ENCODE measurements at regions of chr13 and their contacts with region 1.

Region 1: GRCh38 chr13:48437371-48437770 is 24.5 kb upstream of the LPAR6 start:
- H3K4me3 Mint-ChIP-seq: no peak overlapping the region
- H3K27ac Mint-ChIP-seq: peak overlapping the region; percentile 93
- H3K4me1 Mint-ChIP-seq: peaks cover 48% of the 10 kb centered on the region
- H3K27me3 Mint-ChIP-seq: no peaks in the 10 kb centered on the region

Region 2: GRCh38 chr13:48233046-48233907 is 204.1 kb before region 1 on chr13 and contains the start of gene ITM2B:
- intact Hi-C with region 1: no loop called
- H3K4me3 Mint-ChIP-seq: peak within 1 kb of the TSS; percentile 87
- H3K27ac Mint-ChIP-seq: peak within 1 kb of the TSS; percentile 94
- H3K4me1 Mint-ChIP-seq: peaks cover 26% of the 10 kb centered on the region
- H3K27me3 Mint-ChIP-seq: peaks cover 11% of the 10 kb centered on the region

Region 3: GRCh38 chr13:48400850-48401291 is 36.5 kb before region 1 on chr13:
- intact Hi-C with region 1: loop called (anchors 5 kb)
- H3K4me3 Mint-ChIP-seq: no peak overlapping the region
- H3K27ac Mint-ChIP-seq: peak overlapping the region; percentile 57
- H3K4me1 Mint-ChIP-seq: peaks cover 46% of the 10 kb centered on the region
- H3K27me3 Mint-ChIP-seq: no peaks in the 10 kb centered on the region

Region 4: GRCh38 chr13:48477191-48477855 is 40.0 kb after region 1 on chr13:
- intact Hi-C with region 1: loop called (anchors 5 kb)
- H3K4me3 Mint-ChIP-seq: peak overlapping the region; percentile 68
- H3K27ac Mint-ChIP-seq: peak overlapping the region; percentile 89
- H3K4me1 Mint-ChIP-seq: peaks cover 30% of the 10 kb centered on the region
- H3K27me3 Mint-ChIP-seq: no peaks in the 10 kb centered on the region

Region 5: GRCh38 chr13:48551329-48551728 is 114.0 kb after region 1 on chr13:
- intact Hi-C with region 1: no loop called
- H3K4me3 Mint-ChIP-seq: no peak overlapping the region
- H3K27ac Mint-ChIP-seq: no peak overlapping the region
- H3K4me1 Mint-ChIP-seq: peaks cover 21% of the 10 kb centered on the region
- H3K27me3 Mint-ChIP-seq: no peaks in the 10 kb centered on the region

Region 6: GRCh38 chr13:48790966-48791365 is 353.6 kb after region 1 on chr13:
- intact Hi-C with region 1: no loop called
- H3K4me3 Mint-ChIP-seq: no peak overlapping the region
- H3K27ac Mint-ChIP-seq: no peak overlapping the region
- H3K4me1 Mint-ChIP-seq: peaks cover 16% of the 10 kb centered on the region
- H3K27me3 Mint-ChIP-seq: no peaks in the 10 kb centered on the region

Region 7: DNA sequence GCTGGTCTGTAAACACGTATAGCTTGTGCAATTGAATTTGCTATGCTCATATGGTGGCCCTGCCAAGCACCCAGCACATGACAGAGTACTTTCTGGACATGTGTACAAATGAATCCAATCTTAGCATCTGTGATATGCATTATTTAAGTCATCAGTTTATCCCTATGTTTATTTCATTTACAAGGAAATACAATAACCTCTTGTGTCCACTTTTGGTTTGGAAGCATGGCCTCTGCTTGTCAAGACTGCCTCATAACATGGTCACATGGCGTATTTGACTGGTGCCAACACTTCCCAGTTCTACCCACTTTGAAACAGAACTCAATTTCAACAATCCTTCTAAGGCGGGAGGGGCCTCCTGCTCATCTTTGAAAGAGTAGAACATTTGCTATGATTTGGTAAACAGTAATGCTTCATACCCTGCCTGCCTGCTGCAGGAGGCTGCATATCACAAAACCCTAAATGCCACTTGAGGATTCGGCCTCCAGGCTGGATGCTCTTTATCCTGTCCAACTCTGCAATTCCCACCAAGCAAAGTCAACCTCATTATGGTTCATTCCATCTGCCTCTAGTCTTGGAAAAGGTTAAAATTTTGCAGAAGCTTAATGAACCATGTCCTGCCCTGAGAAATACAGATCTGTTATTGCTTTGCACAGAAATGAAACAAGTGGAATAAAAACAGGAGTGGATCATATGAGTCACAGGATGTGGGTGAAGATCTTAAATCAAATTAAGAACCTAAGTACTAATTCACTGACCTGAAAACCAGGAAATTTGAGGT is 367.6 kb after region 1 on chr13:
- intact Hi-C with region 1: no loop called
- H3K4me3 Mint-ChIP-seq: no peak overlapping the region
- H3K27ac Mint-ChIP-seq: no peak overlapping the region
- H3K4me1 Mint-ChIP-seq: peaks cover 26% of the 10 kb centered on the region
- H3K27me3 Mint-ChIP-seq: peaks cover 2% of the 10 kb centered on the region